ENCODE measurements at regions of chr4 and their contacts with region 1.

Region 1: DNA sequence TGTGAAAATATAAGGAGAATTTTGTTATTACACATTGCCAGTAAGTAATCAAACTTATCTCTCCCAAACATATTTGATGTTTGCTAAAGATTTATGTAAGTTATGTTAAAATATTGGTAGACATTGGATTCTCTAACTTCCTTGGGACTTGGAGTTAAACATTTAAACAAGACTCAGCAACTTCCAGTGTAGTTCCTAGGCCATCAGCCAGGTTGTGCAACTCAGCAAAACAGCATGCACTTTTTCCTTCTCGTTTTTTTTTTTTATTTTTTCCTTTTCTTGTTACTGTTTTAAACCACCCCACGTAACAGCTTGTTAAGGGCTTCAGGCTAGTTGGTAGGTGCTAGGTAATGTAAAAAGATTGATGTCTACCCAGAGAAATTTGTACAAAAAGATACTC is 510.4 kb downstream of the ANKRD50 start:
- DNase-seq: no peak
- ATAC-seq: no peak
- H3K4me3 ChIP-seq: no peak overlapping the region
- H3K27ac ChIP-seq: no peak overlapping the region
- H3K4me1 ChIP-seq: peaks cover 66% of the 10 kb centered on the region
- H3K27me3 ChIP-seq: no peaks in the 10 kb centered on the region
- CTCF ChIP-seq: no peak

Region 2: DNA sequence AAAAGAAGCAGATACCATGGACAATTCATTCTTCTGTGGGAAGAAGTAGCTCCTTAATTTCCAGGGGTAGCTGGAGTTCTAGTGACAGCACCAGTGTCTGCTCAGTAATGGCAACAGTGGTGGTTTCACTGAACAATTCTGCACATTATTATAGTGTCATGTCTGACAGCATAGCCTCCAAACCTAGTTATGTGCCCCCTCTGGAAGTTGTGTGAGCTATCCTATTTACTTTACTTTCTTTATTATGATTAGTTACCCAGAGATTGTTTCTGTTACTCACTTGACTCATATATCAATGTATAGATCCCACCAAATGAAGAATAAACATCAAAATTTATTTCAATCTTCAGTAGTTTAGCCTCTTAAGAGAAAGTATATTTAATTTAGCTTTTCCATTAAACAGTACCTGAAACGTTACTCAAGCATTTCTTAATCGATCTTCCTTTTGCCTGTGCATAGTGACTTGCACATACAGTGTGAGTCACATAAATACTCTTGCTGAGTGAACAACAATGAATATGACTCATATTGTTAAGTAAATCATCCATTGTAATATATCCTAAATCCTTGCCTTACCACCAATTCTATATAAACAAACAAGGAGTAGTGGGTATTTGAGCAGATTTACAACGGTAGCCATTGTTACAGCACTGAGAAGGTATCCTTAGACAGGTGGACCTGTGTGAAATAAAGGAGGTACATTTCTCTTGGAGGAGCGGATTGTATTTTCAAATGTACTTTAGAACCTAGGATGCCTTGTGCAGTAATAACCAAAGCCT is 24.3 kb before region 1 on chr4:
- CTCF ChIA-PET with region 1: no interaction called
- POLR2A ChIA-PET with region 1: no interaction called
- intact Hi-C with region 1: loop called (anchors 1 kb)
- DNase-seq: peak; percentile 80
- ATAC-seq: peak; percentile 83
- H3K4me3 ChIP-seq: peak overlapping the region; percentile 37; the same call in 1 of the 2 replicates
- H3K27ac ChIP-seq: peak overlapping the region; percentile 76
- H3K4me1 ChIP-seq: peaks cover 24% of the 10 kb centered on the region
- H3K27me3 ChIP-seq: no peaks in the 10 kb centered on the region
- CTCF ChIP-seq: no peak

Region 3: GRCh38 chr4:124234771-124235170 is 32.7 kb after region 1 on chr4:
- CTCF ChIA-PET with region 1: no interaction called
- POLR2A ChIA-PET with region 1: no interaction called
- intact Hi-C with region 1: loop called (anchors 5 kb)
- DNase-seq: peak; percentile 46
- ATAC-seq: peak; percentile 58
- H3K4me3 ChIP-seq: no peak overlapping the region
- H3K27ac ChIP-seq: no peak overlapping the region
- H3K4me1 ChIP-seq: peaks cover 18% of the 10 kb centered on the region
- H3K27me3 ChIP-seq: no peaks in the 10 kb centered on the region
- CTCF ChIP-seq: no peak

Region 4: GRCh38 chr4:124262211-124263179 is 60.4 kb after region 1 on chr4:
- CTCF ChIA-PET with region 1: no interaction called
- POLR2A ChIA-PET with region 1: no interaction called
- intact Hi-C with region 1: loop called (anchors 1 kb)
- DNase-seq: peak; percentile 87
- ATAC-seq: peak; percentile 98
- H3K4me3 ChIP-seq: no peak overlapping the region; the same call in 1 of the 2 replicates
- H3K27ac ChIP-seq: no peak overlapping the region
- H3K4me1 ChIP-seq: peaks cover 8% of the 10 kb centered on the region
- H3K27me3 ChIP-seq: no peaks in the 10 kb centered on the region
- CTCF ChIP-seq: peak; percentile 87